Activated naive CD4-positive, alpha-beta T cell treated with anti-CD3 and anti-CD28 coated beads for 36 hours (primary cell): ENCODE measurements at regions of chr4 and their contacts with region 1.

Region 1: DNA sequence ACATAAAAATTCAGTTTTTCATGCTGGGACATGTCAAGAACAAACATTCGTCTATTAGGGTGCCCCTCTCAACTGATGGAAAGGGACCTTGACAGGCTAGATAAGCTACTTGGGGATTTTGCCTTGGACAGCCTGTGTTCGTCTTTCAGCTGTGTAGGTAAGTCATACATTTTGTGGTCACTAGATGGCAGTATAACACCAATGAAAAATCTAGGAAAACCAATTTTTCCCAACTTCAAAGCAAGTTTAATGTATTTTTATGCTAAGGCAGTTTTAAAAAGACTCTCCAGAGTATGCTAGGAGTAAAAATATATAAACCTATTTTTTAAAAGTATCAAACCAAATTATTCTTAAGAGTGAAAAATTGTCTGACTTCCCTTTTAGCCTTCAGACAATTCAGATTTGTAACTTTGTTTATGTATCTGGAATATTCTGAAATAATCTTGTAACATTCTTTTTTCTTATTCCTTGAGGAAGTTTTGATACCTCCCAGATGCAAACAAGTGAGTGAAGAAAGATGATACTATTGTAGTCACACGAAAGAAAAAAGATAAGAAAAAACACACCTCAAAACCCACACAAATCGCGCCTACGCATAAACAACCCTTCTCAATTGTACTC is 158.3 kb downstream of the CPE start:
- DNase-seq: no peak
- H3K4me3 Mint-ChIP-seq: no peak overlapping the region
- H3K27ac Mint-ChIP-seq: no peak overlapping the region
- H3K4me1 Mint-ChIP-seq: no peaks in the 10 kb centered on the region
- H3K27me3 Mint-ChIP-seq: peaks cover 6% of the 10 kb centered on the region

Region 2: GRCh38 chr4:165476214-165477098 is 60.7 kb before region 1 on chr4:
- CTCF ChIA-PET with region 1: no interaction called
- intact Hi-C with region 1: no loop called
- DNase-seq: no peak
- H3K4me3 Mint-ChIP-seq: no peak overlapping the region
- H3K27ac Mint-ChIP-seq: no peak overlapping the region
- H3K4me1 Mint-ChIP-seq: no peaks in the 10 kb centered on the region
- H3K27me3 Mint-ChIP-seq: peaks cover 11% of the 10 kb centered on the region

Region 3: DNA sequence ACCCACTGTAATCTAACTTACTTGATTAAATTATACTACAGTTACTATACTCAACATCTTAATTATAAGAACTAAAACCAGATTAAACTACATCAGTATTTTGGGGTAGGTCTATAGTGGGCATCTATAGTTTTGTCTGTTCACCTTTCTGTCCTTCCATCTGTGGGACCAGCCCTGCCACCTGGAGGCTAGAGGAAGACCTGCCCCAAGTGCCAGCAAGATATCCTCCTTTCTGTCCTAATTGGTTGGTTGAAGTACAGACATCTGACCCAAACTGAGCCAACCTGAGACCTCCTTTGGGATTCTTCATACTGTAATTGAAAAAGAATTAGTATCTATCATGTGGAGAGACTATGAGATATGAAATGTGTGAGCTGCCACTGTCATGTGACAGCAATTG is 163.7 kb after region 1 on chr4:
- CTCF ChIA-PET with region 1: no interaction called
- intact Hi-C with region 1: loop called (anchors 2 kb)
- DNase-seq: peak; percentile 13
- H3K4me3 Mint-ChIP-seq: no peak overlapping the region
- H3K27ac Mint-ChIP-seq: no peak overlapping the region
- H3K4me1 Mint-ChIP-seq: no peaks in the 10 kb centered on the region
- H3K27me3 Mint-ChIP-seq: no peaks in the 10 kb centered on the region

Region 4: DNA sequence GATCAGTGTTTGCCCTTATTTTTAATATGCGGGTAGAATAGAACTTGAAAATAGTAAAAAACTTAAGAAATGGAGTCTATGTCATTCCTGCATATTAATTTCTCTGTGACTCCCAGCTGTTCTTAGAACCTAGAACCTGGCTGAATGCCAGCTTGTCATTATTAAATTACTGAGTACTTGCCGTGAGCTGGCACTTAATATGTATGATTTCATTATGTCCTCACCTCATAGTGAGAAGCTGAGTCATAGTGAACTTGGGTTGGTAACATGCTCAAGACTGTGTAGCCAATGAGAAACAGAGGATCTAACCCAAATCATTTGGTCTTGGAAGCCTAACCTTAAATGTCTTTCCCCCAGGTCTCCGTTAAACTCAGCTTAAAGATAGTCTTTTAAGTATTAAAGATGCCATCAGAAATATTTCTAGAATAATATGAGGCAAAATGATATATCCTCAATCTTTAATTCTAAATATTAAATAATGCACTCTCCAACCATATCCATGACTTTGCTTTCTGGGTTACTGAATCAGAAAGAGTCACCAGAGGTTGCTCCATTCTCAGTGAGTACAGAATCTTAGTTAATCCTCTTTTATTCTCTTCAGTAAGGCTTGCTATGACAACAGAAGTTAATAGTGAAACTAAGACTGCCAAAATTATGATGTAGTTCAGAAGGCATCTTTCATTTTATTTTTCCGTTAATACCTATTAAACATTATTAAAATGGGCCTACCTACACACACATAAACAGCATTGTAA is 277.3 kb after region 1 on chr4:
- CTCF ChIA-PET with region 1: no interaction called
- intact Hi-C with region 1: no loop called
- DNase-seq: no peak
- H3K4me3 Mint-ChIP-seq: no peak overlapping the region
- H3K27ac Mint-ChIP-seq: no peak overlapping the region
- H3K4me1 Mint-ChIP-seq: no peaks in the 10 kb centered on the region
- H3K27me3 Mint-ChIP-seq: no peaks in the 10 kb centered on the region

Region 5: GRCh38 chr4:166091912-166092510 is 554.9 kb after region 1 on chr4:
- CTCF ChIA-PET with region 1: interaction called, 9 read pairs
- intact Hi-C with region 1: loop called (anchors 1 kb)
- DNase-seq: no peak
- H3K4me3 Mint-ChIP-seq: no peak overlapping the region
- H3K27ac Mint-ChIP-seq: no peak overlapping the region
- H3K4me1 Mint-ChIP-seq: no peaks in the 10 kb centered on the region
- H3K27me3 Mint-ChIP-seq: peaks cover 2% of the 10 kb centered on the region

Region 6: DNA sequence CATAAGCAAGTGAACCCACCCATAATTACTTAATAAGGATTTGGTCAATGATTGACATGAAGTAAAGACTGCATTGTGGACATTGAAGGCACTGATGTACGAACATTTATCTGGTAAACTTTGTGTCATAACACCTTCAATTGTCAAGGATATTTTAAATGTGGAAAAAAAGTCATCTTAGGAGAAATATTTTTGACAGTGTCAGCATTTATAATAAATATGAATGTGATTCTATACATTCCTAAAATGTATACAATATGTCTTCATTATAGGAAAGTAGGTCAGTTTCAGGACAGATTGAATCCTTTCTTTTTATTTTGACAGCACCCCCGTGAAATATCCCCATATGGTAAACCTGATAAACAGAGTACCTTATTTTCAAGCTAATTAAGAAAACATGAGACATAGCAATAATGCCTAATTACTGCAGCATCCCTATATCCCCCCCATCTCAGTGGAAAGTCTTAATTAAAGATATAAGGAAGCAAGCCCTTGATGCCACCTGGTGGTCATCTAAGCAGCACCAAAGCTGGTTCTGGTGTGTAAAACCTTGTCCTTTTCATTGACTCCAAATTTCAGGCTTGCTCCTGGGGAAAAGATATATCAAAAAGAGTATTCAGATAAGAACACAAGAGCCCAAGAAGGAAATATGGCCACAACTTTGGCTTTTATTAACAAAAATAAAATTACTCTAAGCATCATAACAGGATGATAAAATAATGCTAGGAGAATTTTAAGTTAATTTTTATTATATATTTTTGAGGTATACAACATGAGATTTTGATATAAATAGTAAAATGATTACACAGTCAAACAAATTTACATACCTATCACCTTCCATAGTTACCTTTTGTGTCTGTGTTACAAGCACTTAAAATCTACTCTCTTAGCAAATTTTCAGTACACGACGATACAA is 715.6 kb after region 1 on chr4:
- CTCF ChIA-PET with region 1: no interaction called
- intact Hi-C with region 1: loop called (anchors 5 kb)
- DNase-seq: peak; percentile 10
- H3K4me3 Mint-ChIP-seq: no peak overlapping the region
- H3K27ac Mint-ChIP-seq: no peak overlapping the region
- H3K4me1 Mint-ChIP-seq: no peaks in the 10 kb centered on the region
- H3K27me3 Mint-ChIP-seq: no peaks in the 10 kb centered on the region